ENCODE measurements at regions of chr6 and their contacts with region 1.

Region 1: DNA sequence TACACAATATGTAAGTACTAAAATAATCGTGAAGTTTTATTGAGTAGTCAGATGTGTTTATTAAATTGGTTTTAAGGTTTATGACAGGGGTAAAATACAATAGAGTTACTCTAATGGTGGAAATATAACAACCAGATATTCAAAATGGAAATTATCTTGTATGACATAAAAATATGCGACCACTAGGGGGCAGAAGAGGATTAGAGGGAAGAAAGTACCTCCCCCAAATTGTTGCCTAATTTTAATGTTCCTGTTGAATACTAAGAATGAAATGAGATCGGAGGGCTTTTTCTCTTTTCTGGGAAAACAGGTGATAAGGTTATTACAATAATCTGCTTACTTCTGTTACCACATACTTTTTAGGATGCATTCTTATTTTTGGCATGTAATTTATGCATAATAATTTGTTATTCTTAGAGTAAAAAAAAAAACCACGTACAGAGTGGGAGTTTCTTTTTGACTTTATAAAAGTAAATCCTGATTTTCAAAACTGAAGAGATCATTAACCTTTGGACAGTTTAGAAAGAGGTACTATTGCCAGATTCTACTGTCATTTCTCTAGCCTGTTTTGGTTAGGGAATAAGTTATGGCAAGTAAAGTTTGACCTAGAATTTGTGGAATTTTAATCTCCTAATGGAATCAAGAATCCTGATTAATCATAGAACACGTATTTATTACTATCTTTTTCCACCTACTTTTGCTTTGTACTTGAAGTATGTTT is 159.2 kb downstream of the CD109 start:
- DNase-seq: no peak
- H3K4me3 ChIP-seq: no peak overlapping the region
- H3K27ac ChIP-seq: no peak overlapping the region
- H3K4me1 ChIP-seq: no peaks in the 10 kb centered on the region
- H3K27me3 ChIP-seq: no peaks in the 10 kb centered on the region
- CTCF ChIP-seq: peak; percentile 91

Region 2: GRCh38 chr6:73969971-73970970 is 115.1 kb after region 1 on chr6:
- CTCF ChIA-PET with region 1: no interaction called
- POLR2A ChIA-PET with region 1: no interaction called
- intact Hi-C with region 1: loop called (anchors 5 kb)
- DNase-seq: peak in 1 of 2 experiments; percentile 56
- H3K4me3 ChIP-seq: no peak overlapping the region
- H3K27ac ChIP-seq: no peak overlapping the region
- H3K4me1 ChIP-seq: peaks cover 5% of the 10 kb centered on the region; the same call in 1 of the 2 replicates
- H3K27me3 ChIP-seq: no peaks in the 10 kb centered on the region
- CTCF ChIP-seq: peak; percentile 88

Region 3: DNA sequence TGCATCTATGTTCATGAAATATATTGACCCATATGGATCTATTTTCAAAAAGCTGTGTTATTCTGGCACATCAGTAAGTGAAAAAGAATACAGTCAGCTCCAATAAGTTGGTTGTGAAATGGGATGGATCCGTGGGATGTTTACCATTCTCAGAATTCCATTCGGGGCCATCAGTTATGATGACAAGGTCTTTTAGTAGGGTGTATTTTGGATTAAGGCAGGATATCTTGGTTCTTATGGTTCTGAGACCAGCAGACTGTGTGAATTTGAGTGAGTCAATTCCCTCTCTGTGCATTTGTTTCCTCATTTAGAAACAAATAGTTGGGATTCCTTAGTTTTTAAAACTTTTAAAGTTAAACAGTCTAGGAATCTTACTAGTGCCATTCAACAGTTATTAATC is 128.2 kb after region 1 on chr6:
- CTCF ChIA-PET with region 1: no interaction called
- POLR2A ChIA-PET with region 1: no interaction called
- intact Hi-C with region 1: loop called (anchors 5 kb)
- DNase-seq: no peak
- H3K4me3 ChIP-seq: no peak overlapping the region
- H3K27ac ChIP-seq: no peak overlapping the region
- H3K4me1 ChIP-seq: no peaks in the 10 kb centered on the region
- H3K27me3 ChIP-seq: no peaks in the 10 kb centered on the region
- CTCF ChIP-seq: no peak